ENCODE measurements at regions of chr18 and their contacts with region 1.

Region 1: DNA sequence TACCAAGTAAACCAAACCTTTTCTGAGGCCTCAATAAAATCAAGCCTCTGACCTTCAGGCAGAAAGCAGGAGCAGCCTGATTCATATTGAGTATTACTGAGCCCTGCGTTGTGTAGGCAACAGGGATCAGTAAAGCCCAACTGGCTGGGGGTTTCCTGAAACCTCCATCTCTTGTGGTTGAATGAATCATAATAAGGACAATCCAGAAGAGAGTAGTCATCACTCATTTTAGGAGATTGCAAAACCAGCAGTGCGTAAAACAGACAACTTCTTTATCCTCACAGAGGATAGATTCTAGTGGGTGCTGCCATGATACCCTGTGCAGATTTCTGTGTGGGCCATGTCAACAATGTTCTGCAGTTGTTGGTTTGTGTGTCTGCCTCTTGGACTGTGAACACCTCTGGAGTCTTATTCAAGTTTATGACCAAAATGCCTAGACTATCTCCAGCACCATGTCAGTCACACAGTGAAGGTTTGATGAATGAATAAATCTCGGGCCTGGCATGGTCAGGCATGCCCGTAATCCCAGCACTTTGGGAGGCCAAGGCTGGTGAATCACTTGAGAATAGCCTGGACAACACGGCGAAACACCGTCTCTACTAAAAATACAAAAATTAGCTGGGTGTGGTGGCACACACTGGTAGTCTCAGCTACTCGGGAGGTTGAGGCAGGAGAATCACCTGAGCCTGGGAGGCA is 51.8 kb upstream of the RAB27B start:
- DNase-seq: peak; percentile 95
- ATAC-seq: peak; percentile 90
- H3K4me3 ChIP-seq: peak overlapping the region in 1 of 2 experiments; percentile 25; a peak in 2 of 4 replicates
- H3K27ac ChIP-seq: peak overlapping the region; percentile 69
- H3K4me1 ChIP-seq: peaks cover 16 to 38% of the 10 kb centered on the region in 2 experiments
- H3K27me3 ChIP-seq: no peaks in the 10 kb centered on the region
- CTCF ChIP-seq: no peak
- POLR2A ChIP-seq: no peak
- RAD21 ChIP-seq: no peak

Region 2: GRCh38 chr18:54828281-54828881 is 52.0 kb after region 1 on chr18 and contains the start of gene RAB27B:
- CTCF ChIA-PET with region 1: no interaction called
- POLR2A ChIA-PET with region 1: no interaction called
- RAD21 ChIA-PET with region 1: no interaction called
- intact Hi-C with region 1: loop called (anchors 2 kb)
- DNase-seq: peak; percentile 75
- ATAC-seq: peak; percentile 94
- H3K4me3 ChIP-seq: peak within 1 kb of the TSS; percentile 53 to 69
- H3K27ac ChIP-seq: peak within 1 kb of the TSS; percentile 78
- H3K4me1 ChIP-seq: peaks cover 13 to 26% of the 10 kb centered on the region in 2 experiments; a peak in 3 of 4 replicates
- H3K27me3 ChIP-seq: no peaks in the 10 kb centered on the region
- CTCF ChIP-seq: no peak
- POLR2A ChIP-seq: no peak
- RAD21 ChIP-seq: no peak; the same call in 1 of the 2 replicates
- total RNA-seq, gene RAB27B: 2.2 TPM

Region 3: DNA sequence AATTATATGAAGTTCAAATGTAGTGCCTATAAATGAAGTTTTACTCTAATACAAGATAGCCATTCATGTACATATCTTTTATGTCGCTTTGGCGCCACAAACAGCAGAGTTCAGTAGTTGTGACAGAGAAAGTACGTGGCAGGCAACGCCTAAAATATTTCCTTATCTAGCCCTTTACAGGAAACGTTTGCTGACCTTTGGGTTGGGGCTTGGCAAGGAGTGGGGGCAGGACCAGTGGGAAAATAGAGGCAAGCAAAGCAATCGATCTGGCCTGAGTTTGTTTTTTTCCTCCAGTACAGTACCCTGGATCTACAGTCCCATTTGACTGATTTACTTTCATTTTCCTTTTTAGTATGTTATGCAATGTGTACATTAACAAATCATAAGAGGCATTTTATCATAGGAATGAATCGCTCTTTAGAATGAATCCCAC is 169.7 kb after region 1 on chr18:
- CTCF ChIA-PET with region 1: no interaction called
- POLR2A ChIA-PET with region 1: no interaction called
- RAD21 ChIA-PET with region 1: no interaction called
- intact Hi-C with region 1: loop called (anchors 5 kb)
- DNase-seq: peak; percentile 26
- ATAC-seq: peak; percentile 73
- H3K4me3 ChIP-seq: peak overlapping the region; percentile 39 to 61
- H3K27ac ChIP-seq: no peak overlapping the region; the same call in 1 of the 2 replicates
- H3K4me1 ChIP-seq: peaks cover 10 to 21% of the 10 kb centered on the region in 2 experiments
- H3K27me3 ChIP-seq: no peaks in the 10 kb centered on the region
- CTCF ChIP-seq: no peak
- POLR2A ChIP-seq: no peak
- RAD21 ChIP-seq: no peak; the same call in 1 of the 2 replicates

Region 4: GRCh38 chr18:54961016-54961423 is 184.6 kb after region 1 on chr18:
- CTCF ChIA-PET with region 1: no interaction called
- POLR2A ChIA-PET with region 1: no interaction called
- RAD21 ChIA-PET with region 1: no interaction called
- intact Hi-C with region 1: loop called (anchors 5 kb)
- DNase-seq: no peak
- ATAC-seq: no peak
- H3K4me3 ChIP-seq: no peak overlapping the region
- H3K27ac ChIP-seq: no peak overlapping the region
- H3K4me1 ChIP-seq: peaks cover 14 to 18% of the 10 kb centered on the region in 2 experiments; a peak in 3 of 4 replicates
- H3K27me3 ChIP-seq: no peaks in the 10 kb centered on the region
- CTCF ChIP-seq: no peak
- POLR2A ChIP-seq: no peak
- RAD21 ChIP-seq: no peak

Measured in HCT116 (cell line).